Spleen (tissue), 13 donors: ENCODE measurements at regions of chr3 and their contacts with region 1.

Region 1: GRCh38 chr3:15629860-15630597 is 28.5 kb downstream of the BTD start:
- DNase-seq: no peak
- H3K4me3 ChIP-seq: peak overlapping the region in 7 of 8 donors; percentile 2 to 60 (median 23)
- H3K27ac ChIP-seq: peak overlapping the region in 6 of 8 donors; percentile 29 to 76 (median 69)
- H3K4me1 ChIP-seq: peaks cover 3 to 43% (median 24%) of the 10 kb centered on the region in 6 donors
- H3K27me3 ChIP-seq: no peaks in the 10 kb centered on the region
- CTCF ChIP-seq: peak; percentile 69 to 91 (median 78)
- POLR2A ChIP-seq: no peak

Region 2: GRCh38 chr3:15815696-15816095 is 185.7 kb after region 1 on chr3:
- intact Hi-C with region 1: loop called (anchors 5 kb)
- DNase-seq: no peak
- H3K4me3 ChIP-seq: no peak overlapping the region
- H3K27ac ChIP-seq: peak overlapping the region in 2 of 8 donors; percentile 12 to 55
- H3K4me1 ChIP-seq: peaks cover 0 to 50% (median 23%) of the 10 kb centered on the region in 6 donors
- H3K27me3 ChIP-seq: no peaks in the 10 kb centered on the region
- CTCF ChIP-seq: peak in 8 of 11 experiments; percentile 10 to 65 (median 56)
- POLR2A ChIP-seq: no peak

Region 3: DNA sequence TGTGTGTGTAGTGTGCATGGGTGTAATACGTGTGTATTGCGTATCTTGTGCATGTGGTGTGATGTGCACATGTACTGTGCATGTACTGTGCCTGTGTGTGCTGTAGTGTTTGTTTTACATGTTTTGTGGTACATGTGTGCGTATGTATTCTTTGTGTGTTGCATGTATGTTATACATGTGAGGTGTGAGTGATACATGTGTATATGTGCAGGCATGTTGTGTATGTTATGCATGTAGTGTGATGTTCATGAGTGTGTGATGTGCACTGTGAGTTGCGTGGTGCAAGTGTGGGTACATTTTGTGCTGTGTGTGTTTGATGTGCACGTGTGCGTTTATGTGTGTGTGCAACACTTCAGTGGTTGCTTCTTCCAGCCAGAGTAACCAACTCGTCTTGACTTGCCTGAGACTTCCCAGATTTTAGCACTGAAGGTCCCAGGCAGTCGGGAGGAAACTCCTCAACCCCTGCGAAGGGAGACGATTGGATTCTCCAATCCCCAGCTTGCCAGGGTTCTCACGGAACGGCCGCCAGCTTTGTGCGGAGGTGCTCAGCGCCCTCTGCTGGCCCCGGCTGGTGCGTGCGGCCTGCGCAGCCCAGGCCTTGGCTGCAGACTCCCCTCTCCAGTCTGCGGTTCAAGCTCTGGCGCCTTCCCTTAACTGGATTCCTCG is 548.1 kb after region 1 on chr3:
- intact Hi-C with region 1: loop called (anchors 10 kb)
- DNase-seq: peak; percentile 90
- H3K4me3 ChIP-seq: peak overlapping the region; percentile 18 to 72 (median 40)
- H3K27ac ChIP-seq: peak overlapping the region in 1 of 8 donors; percentile 2
- H3K4me1 ChIP-seq: peaks cover 0 to 51% (median 16%) of the 10 kb centered on the region in 6 donors
- H3K27me3 ChIP-seq: peaks cover 0 to 24% (median 0%) of the 10 kb centered on the region in 7 donors
- CTCF ChIP-seq: peak; percentile 63 to 97 (median 91)
- POLR2A ChIP-seq: no peak

Region 4: GRCh38 chr3:16247276-16248061 is 617.4 kb after region 1 on chr3:
- intact Hi-C with region 1: loop called (anchors 5 kb)
- DNase-seq: peak; percentile 89
- H3K4me3 ChIP-seq: peak overlapping the region in 1 of 8 donors; percentile 27
- H3K27ac ChIP-seq: no peak overlapping the region
- H3K4me1 ChIP-seq: peaks cover 7 to 20% (median 11%) of the 10 kb centered on the region in 6 donors
- H3K27me3 ChIP-seq: no peaks in the 10 kb centered on the region
- CTCF ChIP-seq: peak; percentile 63 to 92 (median 90)
- POLR2A ChIP-seq: no peak